ENCODE measurements at regions of chr1 and their contacts with region 1.

Region 1: DNA sequence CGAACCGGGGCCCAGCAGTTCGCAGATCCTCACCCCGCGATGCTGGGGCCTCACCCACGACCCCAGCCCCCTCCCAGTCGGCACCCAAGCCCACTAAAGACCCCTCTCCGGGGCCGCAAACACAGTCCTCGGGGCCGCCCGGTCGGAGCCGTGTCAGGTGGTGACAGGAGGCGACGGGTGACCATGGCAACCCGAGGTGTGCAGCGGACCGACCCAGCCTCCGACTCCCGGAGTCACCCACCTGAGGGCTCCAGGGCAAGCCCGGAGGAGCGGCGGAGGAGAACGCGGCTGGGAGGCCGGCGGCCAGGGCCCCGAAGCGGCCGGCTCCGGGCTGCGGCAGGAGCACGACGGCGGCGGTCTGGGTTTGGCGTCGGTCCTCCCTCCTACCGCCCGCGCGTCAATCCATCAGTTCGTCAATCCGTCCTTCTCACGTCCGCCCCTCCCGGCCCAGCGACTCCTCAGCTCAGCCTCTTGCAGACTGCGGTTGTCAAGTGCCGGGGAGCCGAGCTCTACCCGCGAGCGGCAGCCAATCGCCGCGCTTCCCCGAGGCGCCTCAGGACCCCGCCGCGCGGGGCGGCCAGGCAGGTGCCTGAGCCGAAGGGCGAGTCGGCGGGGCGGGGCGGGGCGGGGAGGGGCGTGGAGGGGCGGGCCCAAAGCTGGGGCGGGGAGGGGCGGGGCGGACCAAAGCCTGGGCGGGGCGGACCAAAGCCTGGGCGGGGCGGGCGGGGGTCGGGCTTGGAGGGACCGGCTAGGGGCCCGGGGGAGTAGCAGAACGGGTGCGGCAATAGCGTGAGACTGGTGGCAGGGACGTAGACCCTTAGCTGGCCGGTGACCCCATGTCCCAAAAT is at the start of gene WDR47:
- DNase-seq: peak; percentile 99
- ATAC-seq: peak; percentile 99
- H3K4me3 ChIP-seq: peak within 1 kb of the TSS; percentile 87
- H3K27ac ChIP-seq: peak within 1 kb of the TSS; percentile 63
- H3K4me1 ChIP-seq: peaks cover 8 to 12% of the 10 kb centered on the region in 2 experiments; a peak in 4 of 5 replicates
- H3K27me3 ChIP-seq: no peaks in the 10 kb centered on the region
- CTCF ChIP-seq: no peak
- EP300 ChIP-seq: no peak
- POLR2A ChIP-seq: peak; percentile 87
- RAD21 ChIP-seq: no peak
- polyA plus RNA-seq, gene WDR47: 1.3 to 2.0 TPM

Region 2: GRCh38 chr1:109075531-109076490 is 34.0 kb after region 1 on chr1 and contains the start of gene TAF13:
- CTCF ChIA-PET with region 1: no interaction called
- POLR2A ChIA-PET with region 1: interaction called, 3 read pairs
- in situ Hi-C with region 1: no loop called
- intact Hi-C with region 1: loop called (anchors 1 kb)
- DNase-seq: peak; percentile 95 to 98 (median 96)
- ATAC-seq: peak; percentile 99
- H3K4me3 ChIP-seq: peak within 1 kb of the TSS; percentile 79
- H3K27ac ChIP-seq: peak within 1 kb of the TSS; percentile 89
- H3K4me1 ChIP-seq: peaks cover 18 to 20% of the 10 kb centered on the region in 2 experiments; a peak in 4 of 5 replicates
- H3K27me3 ChIP-seq: no peaks in the 10 kb centered on the region
- CTCF ChIP-seq: peak; percentile 17 to 30 (median 29); a peak in 3 of 6 replicates
- EP300 ChIP-seq: no peak
- POLR2A ChIP-seq: peak; percentile 98
- RAD21 ChIP-seq: 0 out of 4 replicates have a peak, but pooled peaks of 1 of the 2 experiments have one; percentile 13
- polyA plus RNA-seq, gene TAF13: 14.9 to 21.0 TPM